ENCODE measurements at regions of chr2 and their contacts with region 1.

Region 1: GRCh38 chr2:219119422-219120043 is 41.1 kb downstream of the NHEJ1 start:
- DNase-seq: peak; percentile 31
- H3K4me3 Mint-ChIP-seq: no peak overlapping the region
- H3K27ac Mint-ChIP-seq: no peak overlapping the region
- H3K4me1 Mint-ChIP-seq: peaks cover 8% of the 10 kb centered on the region
- H3K27me3 Mint-ChIP-seq: no peaks in the 10 kb centered on the region

Region 2: DNA sequence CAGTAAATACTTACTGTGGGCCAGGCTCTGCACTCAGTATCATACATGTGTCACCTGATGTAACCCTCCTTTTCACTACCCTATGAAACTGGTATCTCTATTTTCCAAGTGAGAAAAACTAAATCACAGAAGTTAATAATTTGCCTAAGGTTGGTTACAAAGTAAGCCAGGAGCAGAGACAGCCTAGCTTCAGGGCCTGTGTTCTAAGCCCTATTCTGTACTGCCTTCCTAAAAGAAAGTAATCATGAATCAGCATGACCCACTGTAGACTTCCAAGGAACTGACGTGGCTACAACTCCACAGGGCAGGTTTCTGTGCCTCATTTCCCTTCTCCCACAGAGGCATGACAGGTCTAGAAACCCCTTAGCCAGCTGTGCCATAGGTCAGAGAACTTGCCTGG is 474.4 kb before region 1 on chr2:
- intact Hi-C with region 1: no loop called
- DNase-seq: no peak
- H3K4me3 Mint-ChIP-seq: no peak overlapping the region
- H3K27ac Mint-ChIP-seq: no peak overlapping the region
- H3K4me1 Mint-ChIP-seq: peaks cover 6% of the 10 kb centered on the region
- H3K27me3 Mint-ChIP-seq: no peaks in the 10 kb centered on the region

Region 3: GRCh38 chr2:219029829-219030165 is 89.7 kb before region 1 on chr2:
- intact Hi-C with region 1: loop called (anchors 1 kb)
- DNase-seq: peak; percentile 63
- H3K4me3 Mint-ChIP-seq: no peak overlapping the region
- H3K27ac Mint-ChIP-seq: no peak overlapping the region
- H3K4me1 Mint-ChIP-seq: no peaks in the 10 kb centered on the region
- H3K27me3 Mint-ChIP-seq: peaks cover 12% of the 10 kb centered on the region

Region 4: GRCh38 chr2:219073413-219074129 is 46.0 kb before region 1 on chr2:
- intact Hi-C with region 1: loop called (anchors 1 kb)
- DNase-seq: no peak
- H3K4me3 Mint-ChIP-seq: no peak overlapping the region
- H3K27ac Mint-ChIP-seq: no peak overlapping the region
- H3K4me1 Mint-ChIP-seq: no peaks in the 10 kb centered on the region
- H3K27me3 Mint-ChIP-seq: no peaks in the 10 kb centered on the region

Region 5: DNA sequence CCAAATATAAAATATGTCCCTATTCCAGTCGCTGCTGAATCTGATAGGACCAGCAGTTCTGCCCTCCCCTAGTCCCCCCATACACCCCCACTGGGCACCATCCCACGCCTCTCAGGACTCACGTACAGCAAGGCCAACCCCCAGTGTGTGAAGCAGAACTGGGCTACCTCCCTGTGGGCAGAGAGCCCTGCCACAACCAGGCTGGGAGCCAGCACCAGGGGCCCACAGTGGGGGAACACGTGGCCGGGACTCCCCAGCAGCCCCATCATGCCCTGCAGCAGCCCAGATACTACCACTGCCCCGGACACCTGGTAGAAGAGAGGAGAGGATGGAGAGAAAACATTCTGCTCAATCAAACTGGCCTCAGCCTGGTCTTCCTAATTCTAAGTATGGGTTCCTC is 49.0 kb after region 1 on chr2:
- intact Hi-C with region 1: no loop called
- DNase-seq: no peak
- H3K4me3 Mint-ChIP-seq: no peak overlapping the region
- H3K27ac Mint-ChIP-seq: no peak overlapping the region
- H3K4me1 Mint-ChIP-seq: peaks cover 6% of the 10 kb centered on the region
- H3K27me3 Mint-ChIP-seq: no peaks in the 10 kb centered on the region

Measured in activated T-helper 1 cell treated with anti-CD3 and anti-CD28 coated beads, Interleukin-12 subunit alpha, Interleukin-12 subunit beta, Interleukin-2, Interleukin-4 antibody, amounts not matched to agents 30 ng/mL and 10 ng/mL and 1 ng/mL, durations not matched to agents 14 hours and 24 hours and 36 hours (primary cell).